Common myeloid progenitor, CD34-positive (primary cell): ENCODE measurements at regions of chr3 and their contacts with region 1.

Region 1: DNA sequence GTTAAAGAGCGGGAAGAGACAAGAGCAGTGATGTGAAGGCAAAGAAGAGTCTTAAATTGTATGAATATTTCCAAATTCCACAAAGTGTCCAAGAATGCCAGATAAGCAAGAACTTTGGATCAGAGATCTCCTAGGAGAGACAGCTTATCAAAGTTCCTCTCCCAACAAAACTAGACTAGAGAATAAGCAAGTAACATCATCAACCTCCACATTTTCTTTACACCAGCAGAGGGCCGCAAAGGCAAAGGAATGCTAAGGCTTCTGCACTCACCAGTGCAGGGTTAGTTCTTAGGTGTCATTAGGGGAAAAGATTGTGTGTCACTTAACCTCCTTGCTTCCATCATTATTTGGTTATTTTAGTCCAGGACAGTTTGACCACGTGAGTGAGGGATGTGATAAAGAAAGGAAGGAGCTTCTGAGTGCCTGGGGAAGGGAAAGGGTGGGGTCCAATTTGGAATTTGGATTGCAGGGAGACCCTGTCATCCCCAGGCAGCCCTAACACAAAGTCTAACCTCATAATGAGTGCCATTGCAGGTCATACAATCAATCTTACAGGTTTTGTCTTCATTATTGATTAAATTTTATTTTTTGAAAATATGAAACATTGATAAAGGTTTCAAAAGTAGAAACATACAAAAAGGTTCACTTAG is 7.5 kb upstream of the CMTM6 start:
- DNase-seq: peak; percentile 69 to 87 (median 81)
- H3K4me3 ChIP-seq: no peak overlapping the region
- H3K27ac ChIP-seq: no peak overlapping the region
- H3K4me1 ChIP-seq: no peaks in the 10 kb centered on the region
- H3K27me3 ChIP-seq: no peaks in the 10 kb centered on the region

Region 2: DNA sequence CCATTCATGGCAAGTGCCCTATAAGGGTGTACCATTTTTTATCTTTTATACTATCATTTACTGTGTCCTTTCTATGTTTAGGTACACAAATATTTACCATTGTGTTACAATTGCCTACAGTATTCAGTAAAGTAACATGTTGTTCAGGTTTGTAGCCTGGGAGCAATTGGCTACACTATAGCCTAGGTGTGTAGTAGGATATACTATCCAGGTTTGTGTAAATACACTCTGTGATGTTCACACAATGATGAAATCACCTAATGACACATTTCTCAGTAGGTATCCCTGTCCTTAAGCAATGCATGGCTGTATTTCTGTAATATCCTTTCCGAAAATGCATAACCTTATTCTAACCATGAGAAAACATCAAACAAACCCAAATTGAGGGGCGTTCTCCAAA is 156.9 kb after region 1 on chr3:
- CTCF ChIA-PET with region 1: interaction called, 29 read pairs
- POLR2A ChIA-PET with region 1: no interaction called
- DNase-seq: no peak
- H3K4me3 ChIP-seq: no peak overlapping the region
- H3K27ac ChIP-seq: no peak overlapping the region
- H3K4me1 ChIP-seq: no peaks in the 10 kb centered on the region
- H3K27me3 ChIP-seq: no peaks in the 10 kb centered on the region